Vagina (tissue), 2 donors: ENCODE measurements at regions of chr2 and their contacts with region 1.

Region 1: GRCh38 chr2:28821295-28821958 is 10.8 kb downstream of the SPDYA start:
- DNase-seq: no peak
- H3K4me3 ChIP-seq: no peak overlapping the region
- H3K27ac ChIP-seq: no peak overlapping the region
- H3K4me1 ChIP-seq: no peaks in the 10 kb centered on the region
- H3K27me3 ChIP-seq: no peaks in the 10 kb centered on the region
- CTCF ChIP-seq: peak; percentile 47 to 77 (median 53)
- POLR2A ChIP-seq: no peak

Region 2: DNA sequence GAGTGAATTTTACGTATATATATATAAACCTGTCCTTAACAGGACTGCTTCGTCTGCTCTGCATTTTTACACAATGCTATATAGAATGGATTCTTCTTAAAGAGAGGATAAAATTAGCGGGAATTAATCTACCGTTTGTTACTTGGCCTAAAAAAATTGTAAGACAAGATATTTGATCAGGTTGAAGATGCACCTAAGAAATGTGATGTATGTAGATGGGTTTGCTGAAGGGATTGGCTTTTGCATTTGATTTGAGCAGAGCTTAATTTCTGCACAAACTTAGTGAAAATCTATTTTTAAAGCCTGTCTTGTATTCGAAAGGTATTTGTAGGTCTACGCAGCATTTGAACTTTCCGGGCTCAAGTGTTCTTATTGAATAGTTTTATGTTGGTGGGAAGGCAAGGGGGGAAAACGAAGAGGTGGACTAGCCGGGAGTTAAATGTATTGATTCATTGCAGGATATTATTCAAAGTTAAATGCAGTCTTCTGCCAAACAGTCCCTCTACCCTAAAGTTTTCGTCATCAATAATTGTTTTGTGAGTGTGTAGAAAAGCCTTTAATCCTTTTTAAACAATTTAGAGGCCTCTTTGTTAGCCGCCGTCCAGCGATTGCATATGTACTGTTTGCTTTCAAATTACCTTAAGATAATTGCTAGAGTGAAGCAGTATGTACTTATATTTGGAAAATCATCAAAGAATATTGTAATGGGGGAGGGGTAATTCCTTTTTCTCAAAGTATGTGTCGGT is 68.6 kb before region 1 on chr2:
- intact Hi-C with region 1: no loop called
- DNase-seq: no peak
- H3K4me3 ChIP-seq: peak overlapping the region; percentile 71 to 91
- H3K27ac ChIP-seq: peak overlapping the region; percentile 99
- H3K4me1 ChIP-seq: peaks cover 64% of the 10 kb centered on the region
- H3K27me3 ChIP-seq: no peaks in the 10 kb centered on the region
- CTCF ChIP-seq: no peak
- POLR2A ChIP-seq: no peak

Region 3: DNA sequence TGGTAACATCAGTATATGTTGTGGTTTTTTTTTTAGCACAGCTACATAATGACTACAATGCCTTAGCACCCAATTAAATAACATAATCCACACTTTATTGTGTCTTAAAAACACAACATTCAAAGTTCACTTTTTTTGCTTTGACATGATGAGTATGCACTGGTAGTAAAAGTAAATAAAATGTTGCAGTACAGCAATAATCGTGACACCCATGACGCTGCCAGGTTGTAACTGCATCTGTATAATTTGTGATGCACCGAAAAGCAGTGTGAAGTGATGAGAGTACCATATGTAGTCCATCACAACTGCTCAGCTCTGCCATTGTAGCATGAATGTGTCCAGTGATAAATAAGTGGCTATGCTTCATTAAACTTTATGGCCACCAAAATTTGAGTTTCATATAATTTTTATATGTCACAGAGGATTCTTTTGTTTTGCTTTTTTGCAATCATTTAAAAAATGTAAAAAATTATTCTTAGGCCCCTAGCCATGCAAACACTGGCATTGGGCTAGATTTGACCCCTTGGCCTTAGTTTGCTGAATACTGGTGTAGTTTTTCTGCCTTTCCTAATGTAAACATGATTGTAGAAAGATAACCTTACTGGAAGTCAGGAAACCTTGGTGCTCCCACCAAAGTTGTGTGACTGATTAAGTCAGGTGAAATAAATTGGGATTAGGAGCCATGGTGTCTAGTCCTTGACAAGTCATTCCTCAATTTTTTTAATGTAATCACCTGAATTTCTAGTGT is 53.9 kb before region 1 on chr2:
- intact Hi-C with region 1: loop called (anchors 2 kb)
- DNase-seq: no peak
- H3K4me3 ChIP-seq: no peak overlapping the region
- H3K27ac ChIP-seq: no peak overlapping the region
- H3K4me1 ChIP-seq: peaks cover 93% of the 10 kb centered on the region
- H3K27me3 ChIP-seq: no peaks in the 10 kb centered on the region
- CTCF ChIP-seq: no peak
- POLR2A ChIP-seq: no peak